Left cardiac atrium (tissue), 4 donors: ENCODE measurements at regions of chr13 and their contacts with region 1.

Region 1: GRCh38 chr13:23570099-23570920 is at the start of gene TNFRSF19:
- DNase-seq: peak; percentile 71
- ATAC-seq: peak; percentile 83 to 95
- total RNA-seq, gene TNFRSF19: 35.6 to 45.7 TPM

Region 2: GRCh38 chr13:23466144-23467002 is 103.9 kb before region 1 on chr13:
- intact Hi-C with region 1: loop called in 1 of 2 experiments (anchors 2 kb)
- DNase-seq: peak; percentile 77
- ATAC-seq: peak; percentile 94 to 96